ENCODE measurements at regions of chr1 and their contacts with region 1.

Region 1: GRCh38 chr1:46370214-46370633 is 23.9 kb upstream of the FAAH start:
- DNase-seq: no peak
- ATAC-seq: no peak
- H3K4me3 ChIP-seq: no peak overlapping the region
- H3K27ac ChIP-seq: no peak overlapping the region
- H3K4me1 ChIP-seq: no peaks in the 10 kb centered on the region
- H3K27me3 ChIP-seq: no peaks in the 10 kb centered on the region
- CTCF ChIP-seq: no peak

Region 2: GRCh38 chr1:45221716-45222115 is 1148.5 kb before region 1 on chr1:
- intact Hi-C with region 1: loop called in 1 of 2 experiments (anchors 10 kb)
- DNase-seq: no peak
- ATAC-seq: no peak
- H3K4me3 ChIP-seq: no peak overlapping the region
- H3K27ac ChIP-seq: no peak overlapping the region
- H3K4me1 ChIP-seq: no peaks in the 10 kb centered on the region
- H3K27me3 ChIP-seq: peaks cover 0 to 10% (median 0%) of the 10 kb centered on the region in 3 donors
- CTCF ChIP-seq: no peak